Activated CD4-positive, alpha-beta memory T cell treated with anti-CD3 and anti-CD28 coated beads for 36 hours (primary cell): ENCODE measurements at regions of chr19 and their contacts with region 1.

Region 1: DNA sequence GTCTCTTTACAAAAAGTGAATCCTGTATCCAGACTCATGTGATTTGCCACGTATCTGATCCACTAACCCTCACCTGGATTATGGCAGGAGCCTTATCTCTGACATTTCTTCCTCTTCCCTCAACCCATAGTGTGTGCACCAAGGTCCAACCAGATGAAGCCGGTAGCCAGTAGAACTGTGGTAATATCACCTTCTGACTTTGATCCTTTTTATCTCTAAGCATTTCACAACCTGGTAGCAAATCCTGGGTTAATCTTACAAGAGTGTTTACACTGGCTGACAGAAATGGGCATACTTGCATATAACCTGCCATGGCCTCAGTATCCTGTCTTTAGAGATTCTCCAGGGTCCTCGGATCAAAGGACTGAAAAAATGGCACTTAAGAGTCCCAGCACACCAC is 1.9 kb downstream of the ZNF417 start:
- DNase-seq: no peak
- H3K4me3 Mint-ChIP-seq: no peak overlapping the region
- H3K27ac Mint-ChIP-seq: no peak overlapping the region
- H3K4me1 Mint-ChIP-seq: peaks cover 28% of the 10 kb centered on the region
- H3K27me3 Mint-ChIP-seq: no peaks in the 10 kb centered on the region

Region 2: GRCh38 chr19:57947208-57948134 is 32.9 kb after region 1 on chr19 and contains the start of gene ZNF256:
- CTCF ChIA-PET with region 1: no interaction called
- POLR2A ChIA-PET with region 1: no interaction called
- intact Hi-C with region 1: loop called (anchors 1 kb)
- DNase-seq: peak; percentile 94
- H3K4me3 Mint-ChIP-seq: peak within 1 kb of the TSS; percentile 94
- H3K27ac Mint-ChIP-seq: peak within 1 kb of the TSS; percentile 82
- H3K4me1 Mint-ChIP-seq: peaks cover 16% of the 10 kb centered on the region
- H3K27me3 Mint-ChIP-seq: no peaks in the 10 kb centered on the region
- total RNA-seq, gene ZNF256: 3.9 TPM

Region 3: GRCh38 chr19:58002384-58003173 is 88.0 kb after region 1 on chr19 and contains the start of gene ZNF606:
- CTCF ChIA-PET with region 1: interaction called, 3 read pairs
- POLR2A ChIA-PET with region 1: no interaction called
- intact Hi-C with region 1: loop called (anchors 1 kb)
- DNase-seq: peak; percentile 88
- H3K4me3 Mint-ChIP-seq: peak within 1 kb of the TSS; percentile 78
- H3K27ac Mint-ChIP-seq: peak within 1 kb of the TSS; percentile 56
- H3K4me1 Mint-ChIP-seq: peaks cover 26% of the 10 kb centered on the region
- H3K27me3 Mint-ChIP-seq: no peaks in the 10 kb centered on the region
- total RNA-seq, gene ZNF606: 5.1 to 5.8 TPM